ENCODE measurements at regions of chr1 and their contacts with region 1.

Region 1: DNA sequence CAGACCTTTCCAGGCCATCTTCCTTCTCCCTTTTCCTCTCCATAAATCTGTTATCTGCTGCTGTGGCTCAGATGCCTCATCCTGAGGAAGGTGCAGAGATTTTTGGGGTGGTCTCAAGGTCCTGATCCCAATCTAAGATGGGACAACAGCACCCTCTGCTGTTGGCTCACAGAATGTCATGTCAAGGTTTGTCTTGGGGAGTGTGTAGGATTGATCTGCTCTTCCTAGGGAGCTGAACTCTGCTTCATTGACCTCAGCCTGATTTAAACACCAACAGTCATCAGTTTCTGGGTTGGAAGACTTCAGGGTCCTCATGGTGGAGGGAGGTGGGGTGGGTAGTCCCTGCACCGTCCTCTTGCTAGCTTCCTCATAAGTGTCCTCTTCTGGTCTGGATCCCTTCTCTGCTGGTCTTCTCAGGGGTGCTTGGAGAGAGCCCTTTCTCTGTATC is 62.8 kb upstream of the LAX1 start:
- DNase-seq: peak in 1 of 2 donors; percentile 56
- H3K4me3 ChIP-seq: no peak overlapping the region
- H3K27ac ChIP-seq: peak overlapping the region in 1 of 2 donors; percentile 29
- H3K4me1 ChIP-seq: peaks cover 0 to 10% (median 4%) of the 10 kb centered on the region in 4 donors
- H3K27me3 ChIP-seq: no peaks in the 10 kb centered on the region
- CTCF ChIP-seq: peak; percentile 77 to 96

Region 2: GRCh38 chr1:203504397-203505250 is 197.5 kb before region 1 on chr1:
- intact Hi-C with region 1: loop called (anchors 2 kb)
- DNase-seq: peak; percentile 88 to 89
- H3K4me3 ChIP-seq: no peak overlapping the region
- H3K27ac ChIP-seq: no peak overlapping the region
- H3K4me1 ChIP-seq: peaks cover 0 to 36% (median 14%) of the 10 kb centered on the region in 4 donors
- H3K27me3 ChIP-seq: no peaks in the 10 kb centered on the region
- CTCF ChIP-seq: peak; percentile 83 to 89

Region 3: DNA sequence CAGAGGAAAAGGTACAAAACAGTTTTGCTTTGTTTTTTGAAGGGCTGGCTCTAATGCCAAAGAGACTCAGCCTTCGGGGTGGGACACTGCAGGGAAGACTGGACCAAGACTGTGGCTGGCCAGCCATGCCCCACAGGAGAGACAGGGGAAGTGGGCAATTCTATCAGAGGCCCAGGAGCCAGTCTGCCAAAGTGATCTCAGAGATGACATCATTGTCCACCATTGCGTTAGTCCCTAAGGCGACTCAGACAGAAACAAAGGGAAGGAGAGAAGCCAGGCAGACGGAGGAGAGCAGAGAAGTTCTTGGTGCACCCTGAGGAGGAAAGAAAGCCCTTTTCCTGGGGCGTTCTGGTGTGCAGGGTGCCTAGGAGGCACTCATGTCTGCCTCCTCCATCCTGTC is 181.8 kb before region 1 on chr1:
- intact Hi-C with region 1: no loop called
- DNase-seq: no peak
- H3K4me3 ChIP-seq: no peak overlapping the region
- H3K27ac ChIP-seq: no peak overlapping the region
- H3K4me1 ChIP-seq: peaks cover 0 to 30% (median 23%) of the 10 kb centered on the region in 4 donors
- H3K27me3 ChIP-seq: no peaks in the 10 kb centered on the region
- CTCF ChIP-seq: no peak

Region 4: DNA sequence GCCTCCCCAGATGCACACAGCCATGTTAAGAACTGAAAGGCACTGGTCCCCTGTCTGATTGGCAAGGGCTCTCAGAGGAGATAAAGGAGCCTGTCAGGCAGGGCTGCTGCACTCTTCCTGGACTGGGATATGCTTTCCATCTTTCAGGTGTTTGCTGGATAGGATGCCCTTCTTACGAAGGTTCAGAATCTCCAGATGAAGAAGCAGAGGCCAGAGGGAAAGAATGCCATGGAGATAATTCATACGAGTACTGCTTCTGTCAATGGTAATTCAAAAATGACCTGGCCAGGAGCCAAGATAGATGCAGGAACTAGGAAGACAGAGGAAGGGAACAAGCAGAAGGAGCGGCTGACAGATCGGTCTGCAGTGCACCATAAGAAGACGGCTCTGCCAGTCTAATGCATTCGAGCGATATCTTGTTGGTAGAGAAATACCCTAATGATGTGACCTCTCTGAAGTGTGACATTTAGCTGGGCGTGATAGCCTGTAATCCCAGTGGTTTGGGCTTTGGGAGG is 92.1 kb before region 1 on chr1:
- intact Hi-C with region 1: loop called (anchors 5 kb)
- DNase-seq: no peak
- H3K4me3 ChIP-seq: no peak overlapping the region
- H3K27ac ChIP-seq: no peak overlapping the region
- H3K4me1 ChIP-seq: peaks cover 0 to 8% (median 3%) of the 10 kb centered on the region in 4 donors
- H3K27me3 ChIP-seq: no peaks in the 10 kb centered on the region
- CTCF ChIP-seq: no peak